ENCODE measurements at regions of chrX and their contacts with region 1.

Region 1: GRCh38 chrX:136028251-136028984 is 43.2 kb downstream of the SLC9A6 start:
- DNase-seq: peak; percentile 71
- H3K4me3 Mint-ChIP-seq: no peak overlapping the region
- H3K27ac Mint-ChIP-seq: no peak overlapping the region
- H3K4me1 Mint-ChIP-seq: no peaks in the 10 kb centered on the region
- H3K27me3 Mint-ChIP-seq: peaks cover 54% of the 10 kb centered on the region
- CTCF ChIP-seq: peak; percentile 58

Region 2: GRCh38 chrX:135944486-135944885 is 83.9 kb before region 1 on chrX:
- CTCF ChIA-PET with region 1: no interaction called
- POLR2A ChIA-PET with region 1: no interaction called
- intact Hi-C with region 1: no loop called
- DNase-seq: no peak
- H3K4me3 Mint-ChIP-seq: no peak overlapping the region
- H3K27ac Mint-ChIP-seq: no peak overlapping the region
- H3K4me1 Mint-ChIP-seq: no peaks in the 10 kb centered on the region
- H3K27me3 Mint-ChIP-seq: peaks cover 31% of the 10 kb centered on the region
- CTCF ChIP-seq: no peak

Region 3: GRCh38 chrX:136015016-136015415 is 13.4 kb before region 1 on chrX:
- CTCF ChIA-PET with region 1: interaction called, 23 read pairs
- POLR2A ChIA-PET with region 1: interaction called, 3 read pairs
- intact Hi-C with region 1: no loop called
- DNase-seq: no peak
- H3K4me3 Mint-ChIP-seq: no peak overlapping the region
- H3K27ac Mint-ChIP-seq: no peak overlapping the region
- H3K4me1 Mint-ChIP-seq: no peaks in the 10 kb centered on the region
- H3K27me3 Mint-ChIP-seq: peaks cover 54% of the 10 kb centered on the region
- CTCF ChIP-seq: no peak

Region 4: DNA sequence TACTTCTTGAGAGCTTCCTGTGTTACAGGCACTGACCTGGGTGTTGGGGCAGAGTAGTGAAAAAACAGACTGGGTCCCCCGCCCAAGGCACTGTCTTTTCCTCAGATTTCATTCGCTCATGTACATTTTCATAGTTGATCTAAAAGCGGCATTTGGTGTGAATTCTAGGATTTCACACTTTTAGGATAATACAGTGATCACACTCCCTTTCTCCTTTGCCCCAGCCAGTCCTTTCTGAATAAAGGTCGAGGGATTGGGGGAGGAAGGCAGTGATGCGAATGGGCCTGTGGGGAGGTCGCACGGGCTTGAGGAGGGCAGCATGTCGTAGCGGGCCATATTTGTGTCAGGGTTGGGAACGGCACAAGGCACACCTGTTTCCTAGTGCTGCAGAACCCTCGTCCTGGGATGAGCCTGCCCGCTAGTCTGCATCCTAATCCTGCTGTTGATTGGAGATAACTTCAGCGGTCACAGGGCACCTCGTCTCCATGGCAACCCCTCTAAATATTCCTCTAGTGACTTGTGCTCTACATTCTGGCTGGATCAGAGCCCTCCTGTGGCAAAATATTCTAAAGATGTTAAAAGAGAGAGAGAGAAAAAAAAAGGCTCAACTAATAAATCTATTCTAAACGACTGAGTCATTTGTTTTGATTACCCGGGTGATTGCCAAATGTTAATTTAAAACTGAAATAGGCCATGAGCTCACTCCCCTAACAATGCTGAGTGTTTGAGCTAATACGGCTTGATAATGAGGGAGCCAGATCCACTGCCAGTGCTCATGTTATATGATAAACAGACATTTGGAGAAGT is 140.7 kb after region 1 on chrX:
- CTCF ChIA-PET with region 1: interaction called, 109 read pairs
- POLR2A ChIA-PET with region 1: interaction called, 3 read pairs
- intact Hi-C with region 1: no loop called
- DNase-seq: peak; percentile 56
- H3K4me3 Mint-ChIP-seq: no peak overlapping the region
- H3K27ac Mint-ChIP-seq: no peak overlapping the region
- H3K4me1 Mint-ChIP-seq: peaks cover 16% of the 10 kb centered on the region
- H3K27me3 Mint-ChIP-seq: peaks cover 56% of the 10 kb centered on the region
- CTCF ChIP-seq: no peak

Region 5: GRCh38 chrX:136209016-136209738 is 180.8 kb after region 1 on chrX:
- CTCF ChIA-PET with region 1: interaction called, 22 read pairs
- POLR2A ChIA-PET with region 1: interaction called, 3 read pairs
- intact Hi-C with region 1: loop called (anchors 1 kb)
- DNase-seq: peak; percentile 38
- H3K4me3 Mint-ChIP-seq: no peak overlapping the region
- H3K27ac Mint-ChIP-seq: no peak overlapping the region
- H3K4me1 Mint-ChIP-seq: peaks cover 2% of the 10 kb centered on the region
- H3K27me3 Mint-ChIP-seq: peaks cover 72% of the 10 kb centered on the region
- CTCF ChIP-seq: peak; percentile 42

Region 6: DNA sequence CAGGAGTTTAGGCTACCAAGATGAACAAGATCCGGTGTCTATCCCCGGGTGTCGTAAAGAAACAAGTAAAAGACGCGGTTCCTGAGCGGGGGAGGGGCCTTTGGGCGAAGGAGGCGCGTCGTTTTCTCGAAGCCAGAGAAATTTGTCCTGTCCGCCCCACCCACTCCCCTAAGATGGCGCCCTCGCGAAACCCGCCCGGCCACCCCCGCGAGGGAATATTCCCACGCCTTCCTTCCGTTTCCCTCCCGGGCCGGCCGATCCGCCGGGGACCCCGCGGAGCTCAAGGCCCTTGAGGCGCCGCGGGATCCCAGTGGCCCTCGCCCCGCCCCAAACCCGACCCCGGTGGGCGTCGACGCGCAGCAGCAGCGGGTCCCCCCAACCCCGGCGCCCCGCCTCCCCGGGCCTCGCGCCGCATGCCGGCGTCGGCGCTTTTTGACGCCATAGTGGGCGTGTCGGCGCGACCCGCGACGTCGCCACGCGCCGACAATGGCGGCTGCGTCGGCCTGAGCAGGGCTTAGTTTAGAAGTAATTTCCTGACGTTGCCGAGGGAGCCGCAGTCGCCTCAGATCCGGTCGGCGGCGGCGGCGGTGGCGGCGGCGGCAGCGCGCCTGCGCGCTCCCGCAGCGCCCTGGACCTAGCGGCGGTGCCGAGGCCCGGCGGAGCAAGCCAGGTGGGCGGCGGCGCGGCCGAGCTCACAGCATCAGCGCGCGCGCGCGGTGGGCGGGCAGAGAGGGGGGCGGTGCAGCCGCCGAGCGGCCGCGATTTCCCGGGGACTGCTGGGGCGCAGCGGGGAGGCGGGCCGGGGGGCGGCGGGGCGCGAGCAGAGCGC is 468.6 kb after region 1 on chrX and contains the start of gene HTATSF1:
- CTCF ChIA-PET with region 1: interaction called, 3 read pairs
- POLR2A ChIA-PET with region 1: no interaction called
- intact Hi-C with region 1: loop called (anchors 10 kb)
- DNase-seq: peak; percentile 87
- H3K4me3 Mint-ChIP-seq: peak within 1 kb of the TSS; percentile 81
- H3K27ac Mint-ChIP-seq: peak within 1 kb of the TSS; percentile 89
- H3K4me1 Mint-ChIP-seq: no peaks in the 10 kb centered on the region
- H3K27me3 Mint-ChIP-seq: peaks cover 22% of the 10 kb centered on the region
- CTCF ChIP-seq: no peak
- total RNA-seq, gene HTATSF1: 17.6 and 23.3 TPM in 2 replicates

Region 7: DNA sequence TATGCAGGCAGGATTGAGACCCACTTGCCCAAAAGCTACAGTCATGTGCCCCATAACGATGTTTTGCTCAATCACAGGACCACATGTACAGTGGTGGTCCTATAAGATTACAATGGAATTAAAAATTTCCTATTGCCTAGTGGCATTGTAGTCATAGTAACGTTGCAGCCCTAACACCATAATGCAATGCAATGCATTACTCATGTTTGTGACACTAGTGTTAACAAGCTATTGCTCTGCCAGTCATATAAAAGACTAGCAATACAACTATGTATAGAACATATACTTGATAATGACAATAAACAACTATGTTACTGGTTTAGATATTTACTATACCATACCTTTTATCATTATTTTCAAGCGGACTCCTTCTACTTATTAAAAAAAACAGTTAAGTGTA is 554.2 kb after region 1 on chrX:
- CTCF ChIA-PET with region 1: interaction called, 29 read pairs
- POLR2A ChIA-PET with region 1: no interaction called
- intact Hi-C with region 1: loop called (anchors 2 kb)
- DNase-seq: no peak
- H3K4me3 Mint-ChIP-seq: no peak overlapping the region
- H3K27ac Mint-ChIP-seq: no peak overlapping the region
- H3K4me1 Mint-ChIP-seq: no peaks in the 10 kb centered on the region
- H3K27me3 Mint-ChIP-seq: peaks cover 66% of the 10 kb centered on the region
- CTCF ChIP-seq: no peak

Measured in MCF 10A (cell line).